A549 (cell line): ENCODE measurements at regions of chr7 and their contacts with region 1.

Region 1: DNA sequence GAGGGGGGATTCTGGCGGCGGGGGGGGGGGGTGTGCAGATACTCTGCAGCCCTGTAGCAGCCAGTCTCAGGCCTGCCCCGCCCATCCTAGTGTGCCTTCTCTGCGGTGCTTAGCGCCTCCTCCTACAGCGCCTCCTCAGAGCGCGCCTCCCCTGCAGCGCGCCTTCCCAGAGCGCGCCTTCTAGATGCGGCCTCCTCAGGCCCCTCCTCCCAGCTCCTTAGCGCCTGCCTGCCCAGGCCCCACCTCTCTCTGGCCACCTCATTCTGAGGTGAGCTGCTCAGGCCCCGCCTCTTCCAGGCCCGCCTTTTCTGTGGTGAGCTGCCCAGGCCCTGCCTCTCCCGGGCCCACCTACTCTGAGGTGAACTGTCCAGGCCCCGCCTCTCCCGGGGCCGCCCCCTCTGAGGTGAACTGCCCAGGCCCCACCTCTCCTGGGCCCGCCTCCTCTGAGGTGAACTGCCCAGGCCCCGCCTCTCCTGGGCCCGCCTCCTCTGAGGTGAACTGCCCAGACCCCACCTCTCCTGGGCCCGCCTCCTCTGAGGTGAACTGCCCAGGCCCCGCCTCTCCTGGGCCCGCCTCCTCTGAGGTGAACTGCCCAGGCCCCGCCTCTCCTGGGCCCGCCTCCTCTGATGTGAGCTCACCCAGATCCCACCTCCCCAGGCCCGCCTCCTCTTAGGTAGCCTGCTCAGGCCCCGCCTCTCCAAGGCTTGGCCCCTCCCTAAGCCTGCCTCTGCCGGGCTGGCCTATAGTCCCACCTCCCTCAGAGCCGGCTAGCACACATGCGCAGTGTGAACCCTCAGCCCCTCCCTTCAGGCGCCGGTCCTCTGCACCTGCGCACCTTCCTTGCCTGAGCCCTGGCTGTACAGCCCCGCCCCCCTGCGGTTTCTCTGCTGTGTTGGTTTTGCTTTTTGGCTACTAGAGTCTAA is 2.1 kb upstream of the SGCE start:
- DNase-seq: peak; percentile 36 to 96
- ATAC-seq: peak; percentile 79 to 88
- H3K4me3 ChIP-seq: peak overlapping the region; percentile 64
- H3K27ac ChIP-seq: peak overlapping the region in 1 of 2 experiments; percentile 96; a peak in 2 of 6 replicates
- H3K4me1 ChIP-seq: peaks cover 31% of the 10 kb centered on the region
- CTCF ChIP-seq: no peak
- EP300 ChIP-seq: no peak
- POLR2A ChIP-seq: no peak
- RAD21 ChIP-seq: no peak

Region 2: GRCh38 chr7:93968911-93969620 is 689.0 kb before region 1 on chr7:
- CTCF ChIA-PET with region 1: no interaction called
- POLR2A ChIA-PET with region 1: no interaction called
- DNase-seq: no peak
- ATAC-seq: no peak
- H3K4me3 ChIP-seq: no peak overlapping the region
- H3K27ac ChIP-seq: no peak overlapping the region
- H3K4me1 ChIP-seq: no peaks in the 10 kb centered on the region
- CTCF ChIP-seq: no peak
- EP300 ChIP-seq: no peak
- POLR2A ChIP-seq: no peak
- RAD21 ChIP-seq: no peak

Region 3: GRCh38 chr7:94630855-94631254 is 27.2 kb before region 1 on chr7:
- CTCF ChIA-PET with region 1: interaction called, 10 read pairs
- POLR2A ChIA-PET with region 1: no interaction called
- DNase-seq: no peak
- ATAC-seq: no peak
- H3K4me3 ChIP-seq: no peak overlapping the region
- H3K27ac ChIP-seq: no peak overlapping the region
- H3K4me1 ChIP-seq: peaks cover 15% of the 10 kb centered on the region
- CTCF ChIP-seq: no peak
- EP300 ChIP-seq: no peak
- POLR2A ChIP-seq: no peak
- RAD21 ChIP-seq: no peak

Region 4: GRCh38 chr7:94779070-94779469 is 121.0 kb after region 1 on chr7:
- CTCF ChIA-PET with region 1: no interaction called
- POLR2A ChIA-PET with region 1: no interaction called
- DNase-seq: no peak
- ATAC-seq: no peak
- H3K4me3 ChIP-seq: no peak overlapping the region
- H3K27ac ChIP-seq: no peak overlapping the region
- H3K4me1 ChIP-seq: no peaks in the 10 kb centered on the region
- CTCF ChIP-seq: no peak
- EP300 ChIP-seq: no peak
- POLR2A ChIP-seq: no peak
- RAD21 ChIP-seq: no peak